ENCODE measurements at regions of chr11 and their contacts with region 1.

Region 1: DNA sequence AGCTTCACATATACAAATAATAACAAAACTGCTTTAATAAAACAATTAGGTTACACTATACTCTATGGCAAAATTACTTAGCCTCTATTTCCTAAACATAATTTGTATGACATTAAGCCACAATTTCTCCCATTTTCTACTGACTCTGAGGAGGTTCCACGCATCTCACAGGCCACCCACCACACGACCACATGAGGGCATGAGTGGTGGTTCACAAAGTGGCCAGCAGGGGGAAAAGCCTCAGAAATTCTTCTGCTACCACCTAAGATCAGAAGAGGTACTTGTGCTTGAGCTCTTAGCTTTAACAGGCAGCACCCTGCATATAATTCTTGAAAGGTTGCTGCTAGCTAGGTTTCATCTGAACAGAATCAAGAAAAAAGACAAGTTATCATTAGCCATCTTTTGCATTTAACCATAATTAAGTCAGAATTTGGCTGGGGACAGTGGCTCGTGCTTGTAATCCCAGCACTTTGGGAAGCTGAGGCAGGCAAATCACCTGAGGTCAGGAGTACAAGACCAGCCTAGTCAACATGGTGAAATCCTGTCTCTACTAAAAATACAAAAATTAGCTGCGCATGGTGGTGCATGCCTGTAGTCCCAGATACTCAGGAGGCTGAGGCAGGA is 7.7 kb downstream of the LPXN start:
- DNase-seq: peak; percentile 71 to 90
- ATAC-seq: peak; percentile 92 to 100 (median 99)
- H3K4me3 ChIP-seq: no peak overlapping the region
- H3K4me3 Mint-ChIP-seq: peak overlapping the region; percentile 10
- H3K27ac ChIP-seq: no peak overlapping the region
- H3K27ac Mint-ChIP-seq: peak overlapping the region; percentile 64 to 84
- H3K4me1 ChIP-seq: peaks cover 12% of the 10 kb centered on the region
- H3K4me1 Mint-ChIP-seq: peaks cover 49 to 53% of the 10 kb centered on the region in 2 donors
- H3K27me3 ChIP-seq: no peaks in the 10 kb centered on the region
- H3K27me3 Mint-ChIP-seq: no peaks in the 10 kb centered on the region
- CTCF ChIP-seq: peak; percentile 86

Region 2: GRCh38 chr11:58609723-58610122 is 41.7 kb after region 1 on chr11:
- intact Hi-C with region 1: loop called (anchors 5 kb)
- DNase-seq: no peak
- ATAC-seq: no peak
- H3K4me3 ChIP-seq: no peak overlapping the region
- H3K4me3 Mint-ChIP-seq: no peak overlapping the region
- H3K27ac ChIP-seq: no peak overlapping the region
- H3K27ac Mint-ChIP-seq: no peak overlapping the region
- H3K4me1 ChIP-seq: peaks cover 4% of the 10 kb centered on the region
- H3K4me1 Mint-ChIP-seq: peaks cover 24 to 51% of the 10 kb centered on the region in 2 donors
- H3K27me3 ChIP-seq: no peaks in the 10 kb centered on the region
- H3K27me3 Mint-ChIP-seq: no peaks in the 10 kb centered on the region
- CTCF ChIP-seq: no peak

Region 3: DNA sequence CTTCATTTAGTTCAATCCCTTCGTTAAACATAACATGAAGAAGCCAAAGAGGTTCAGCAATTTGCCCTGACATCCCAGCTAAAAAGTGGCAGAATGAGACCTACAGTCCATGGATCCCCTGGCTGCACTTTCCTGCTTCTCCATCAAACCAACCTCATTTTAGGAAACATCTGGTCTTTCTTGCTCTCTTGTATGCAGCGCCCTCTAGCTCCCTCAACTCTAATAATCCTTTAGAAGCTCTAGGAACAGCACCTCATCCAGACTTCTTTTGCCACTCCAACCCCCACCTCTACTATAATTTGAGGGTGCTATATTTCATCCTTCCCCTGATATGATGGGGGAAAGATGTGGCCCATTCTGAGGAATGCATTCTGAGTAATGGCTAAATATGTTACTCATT is 61.9 kb after region 1 on chr11:
- intact Hi-C with region 1: loop called (anchors 1 kb)
- DNase-seq: peak in 1 of 2 donors; percentile 61
- ATAC-seq: peak in 2 of 3 donors; percentile 38 to 49
- H3K4me3 ChIP-seq: no peak overlapping the region
- H3K4me3 Mint-ChIP-seq: no peak overlapping the region
- H3K27ac ChIP-seq: no peak overlapping the region
- H3K27ac Mint-ChIP-seq: no peak overlapping the region
- H3K4me1 ChIP-seq: no peaks in the 10 kb centered on the region
- H3K4me1 Mint-ChIP-seq: no peaks in the 10 kb centered on the region
- H3K27me3 ChIP-seq: no peaks in the 10 kb centered on the region
- H3K27me3 Mint-ChIP-seq: no peaks in the 10 kb centered on the region
- CTCF ChIP-seq: peak; percentile 12

Region 4: DNA sequence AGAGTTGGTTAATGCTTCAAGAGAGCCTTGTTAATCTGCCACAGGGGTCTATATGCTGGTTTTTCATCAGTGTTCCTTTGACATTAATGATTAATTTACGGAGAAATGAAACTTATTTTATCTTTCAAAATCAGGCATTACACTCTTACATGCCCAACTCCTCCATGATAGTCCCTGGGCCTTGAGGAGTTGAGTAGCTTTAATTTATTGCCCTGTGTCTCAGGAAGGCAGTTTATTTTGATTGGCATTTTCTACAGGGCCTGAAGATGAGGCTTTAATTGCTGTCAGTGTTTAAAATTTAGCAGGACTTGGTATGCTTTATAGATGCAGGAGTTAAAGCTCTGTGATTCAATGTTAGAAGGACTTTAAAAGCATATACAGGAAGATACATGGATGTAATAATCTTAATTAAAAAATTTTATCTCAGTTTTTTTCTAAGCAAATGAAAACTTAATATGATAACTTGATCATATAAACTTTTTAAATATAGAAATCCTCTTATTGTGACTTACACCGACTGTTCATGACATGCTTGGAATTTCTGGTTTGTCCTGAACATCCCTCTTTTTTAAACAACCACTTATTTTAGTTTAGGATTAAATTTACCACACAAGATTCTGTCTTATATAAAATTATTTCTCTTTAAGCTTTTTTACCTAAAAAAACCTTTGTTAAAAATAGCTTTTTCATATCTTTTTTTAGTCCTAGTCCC is 151.6 kb after region 1 on chr11:
- intact Hi-C with region 1: no loop called
- DNase-seq: no peak
- ATAC-seq: no peak
- H3K4me3 ChIP-seq: no peak overlapping the region
- H3K4me3 Mint-ChIP-seq: no peak overlapping the region
- H3K27ac ChIP-seq: no peak overlapping the region
- H3K27ac Mint-ChIP-seq: no peak overlapping the region
- H3K4me1 ChIP-seq: no peaks in the 10 kb centered on the region
- H3K4me1 Mint-ChIP-seq: no peaks in the 10 kb centered on the region
- H3K27me3 ChIP-seq: no peaks in the 10 kb centered on the region
- H3K27me3 Mint-ChIP-seq: peaks cover 5 to 8% of the 10 kb centered on the region in 2 donors
- CTCF ChIP-seq: no peak